ENCODE measurements at regions of chr10 and their contacts with region 1.

Region 1: DNA sequence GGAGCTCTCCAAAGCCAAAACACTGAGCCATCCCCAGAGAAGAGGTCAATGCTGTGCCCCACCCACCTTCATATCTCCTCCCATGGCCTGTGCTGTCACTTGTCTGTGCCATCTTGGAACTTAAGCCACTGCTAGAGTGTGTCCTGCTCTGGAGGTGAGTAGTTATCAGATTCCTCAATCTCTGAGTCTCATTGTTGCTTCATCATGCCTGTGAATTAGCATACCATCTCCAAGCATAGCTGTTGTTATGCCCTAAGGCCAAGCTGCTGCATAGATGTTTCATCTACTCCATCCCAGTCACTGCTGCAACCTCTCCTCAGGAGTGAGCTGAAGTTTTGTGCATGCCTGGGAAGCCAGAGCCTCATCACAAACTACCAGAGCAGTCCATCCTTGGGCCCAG is 349.0 kb downstream of the ZWINT start:
- DNase-seq: no peak
- H3K4me3 ChIP-seq: no peak overlapping the region
- H3K27ac ChIP-seq: no peak overlapping the region
- H3K4me1 ChIP-seq: no peaks in the 10 kb centered on the region
- H3K27me3 ChIP-seq: no peaks in the 10 kb centered on the region
- CTCF ChIP-seq: no peak
- POLR2A ChIP-seq: no peak

Region 2: DNA sequence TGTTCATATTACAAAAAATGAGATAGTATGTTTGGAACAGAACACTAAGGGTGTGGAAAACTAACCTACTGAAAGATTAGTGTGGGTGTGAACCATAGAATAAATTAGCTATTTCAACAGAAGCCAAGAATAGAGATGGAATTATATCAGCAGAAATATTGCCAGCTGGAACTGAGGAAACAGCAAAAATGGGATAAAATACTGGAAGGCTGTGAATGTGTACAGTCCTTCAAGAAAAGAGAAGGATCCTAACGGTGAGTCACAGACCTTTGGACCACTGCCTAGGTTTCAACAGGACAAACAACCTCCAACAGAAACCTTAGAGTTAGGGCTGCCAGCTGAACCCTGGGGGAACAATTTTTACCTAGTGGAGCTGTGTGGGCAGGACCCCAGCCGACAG is 46.0 kb before region 1 on chr10:
- intact Hi-C with region 1: loop called (anchors 5 kb)
- DNase-seq: no peak
- H3K4me3 ChIP-seq: no peak overlapping the region
- H3K27ac ChIP-seq: no peak overlapping the region
- H3K4me1 ChIP-seq: no peaks in the 10 kb centered on the region
- H3K27me3 ChIP-seq: no peaks in the 10 kb centered on the region
- CTCF ChIP-seq: no peak
- POLR2A ChIP-seq: no peak